BJ (cell line): ENCODE measurements at regions of chr3 and their contacts with region 1.

Region 1: GRCh38 chr3:130111185-130111864 is 29.7 kb downstream of the ALG1L2 start:
- DNase-seq: peak; percentile 94
- H3K4me3 ChIP-seq: peak overlapping the region; percentile 80
- H3K27me3 ChIP-seq: no peaks in the 10 kb centered on the region
- CTCF ChIP-seq: no peak

Region 2: DNA sequence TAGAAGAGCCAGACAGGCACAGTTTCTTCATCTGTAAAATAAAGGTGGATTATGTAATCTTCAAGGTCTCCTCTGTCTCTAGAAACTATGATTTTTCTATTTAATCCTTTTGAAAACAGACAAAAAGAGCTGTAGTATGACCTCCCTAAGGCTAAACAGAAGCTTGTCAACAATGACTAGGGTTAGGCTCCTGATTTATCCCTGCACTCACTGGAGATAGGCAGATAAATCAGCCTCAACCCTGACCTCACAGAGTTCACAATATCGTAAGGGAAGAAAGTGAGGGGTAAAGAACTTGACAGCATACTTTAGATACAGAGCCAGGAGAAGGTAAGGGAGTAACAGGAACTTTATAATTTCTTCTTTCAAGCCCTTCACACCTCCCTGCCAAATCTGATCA is 342.6 kb before region 1 on chr3:
- CTCF ChIA-PET with region 1: no interaction called
- POLR2A ChIA-PET with region 1: interaction called, 20 read pairs
- DNase-seq: no peak
- H3K4me3 ChIP-seq: no peak overlapping the region
- H3K27me3 ChIP-seq: no peaks in the 10 kb centered on the region
- CTCF ChIP-seq: no peak

Region 3: DNA sequence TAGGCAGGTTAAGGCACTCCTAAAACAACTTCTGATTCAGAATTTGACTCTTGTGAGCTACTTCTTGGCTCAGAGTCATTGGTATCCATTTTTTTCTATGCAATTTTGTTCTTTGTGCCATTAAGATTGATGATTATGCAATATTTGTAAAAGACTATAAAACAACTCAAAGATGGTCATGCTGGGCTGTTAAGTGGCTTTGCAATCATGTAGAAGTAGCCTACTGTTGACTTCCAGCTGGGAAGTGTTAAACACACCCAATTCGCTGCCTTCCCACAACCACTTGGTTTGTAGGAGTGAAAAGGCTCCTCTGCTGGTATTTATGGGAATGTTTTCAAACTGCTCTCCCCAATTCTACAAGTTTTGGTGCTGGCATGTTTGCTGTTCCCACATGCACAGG is 331.0 kb after region 1 on chr3:
- CTCF ChIA-PET with region 1: no interaction called
- POLR2A ChIA-PET with region 1: interaction called, 10 read pairs
- DNase-seq: no peak
- H3K4me3 ChIP-seq: no peak overlapping the region
- H3K27me3 ChIP-seq: no peaks in the 10 kb centered on the region
- CTCF ChIP-seq: no peak